CD4-positive, alpha-beta memory T cell (primary cell): ENCODE measurements at regions of chr6 and their contacts with region 1.

Region 1: DNA sequence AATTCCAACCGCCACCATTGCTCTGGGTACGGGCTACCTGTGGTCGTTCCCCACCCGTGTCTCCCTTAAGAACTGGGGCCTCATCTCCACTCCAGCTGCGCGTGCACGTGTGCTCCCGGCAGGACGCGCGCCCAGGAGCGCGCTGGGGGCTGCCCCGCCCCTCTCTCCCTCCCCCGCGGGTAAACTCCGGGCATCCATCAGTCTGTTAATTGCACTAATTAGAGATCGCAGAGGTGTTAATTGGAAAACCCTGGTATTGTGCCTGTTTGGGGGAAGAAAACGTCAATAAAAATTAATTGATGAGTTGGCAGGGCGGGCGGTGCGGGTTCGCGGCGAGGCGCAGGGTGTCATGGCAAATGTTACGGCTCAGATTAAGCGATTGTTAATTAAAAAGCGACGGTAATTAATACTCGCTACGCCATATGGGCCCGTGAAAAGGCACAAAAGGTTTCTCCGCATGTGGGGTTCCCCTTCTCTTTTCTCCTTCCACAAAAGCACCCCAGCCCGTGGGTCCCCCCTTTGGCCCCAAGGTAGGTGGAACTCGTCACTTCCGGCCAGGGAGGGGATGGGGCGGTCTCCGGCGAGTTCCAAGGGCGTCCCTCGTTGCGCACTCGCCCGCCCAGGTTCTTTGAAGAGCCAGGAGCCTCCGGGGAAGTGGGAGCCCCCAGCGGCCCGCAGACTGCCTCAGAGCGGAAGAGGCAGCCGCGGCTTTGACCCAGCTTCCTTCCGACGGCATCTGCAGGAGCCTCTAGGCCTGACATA is 14.4 kb downstream of the FOXP4 start:
- DNase-seq: peak; percentile 92 to 98 (median 93)
- H3K4me3 ChIP-seq: peak overlapping the region; percentile 59 to 87
- H3K4me3 Mint-ChIP-seq: peak overlapping the region; percentile 84 to 92 (median 87)
- H3K27ac ChIP-seq: peak overlapping the region; percentile 70
- H3K27ac Mint-ChIP-seq: peak overlapping the region; percentile 83 to 98 (median 94)
- H3K4me1 ChIP-seq: peaks cover 25% of the 10 kb centered on the region
- H3K4me1 Mint-ChIP-seq: peaks cover 16 to 42% (median 29%) of the 10 kb centered on the region in 4 donors
- H3K27me3 ChIP-seq: no peaks in the 10 kb centered on the region
- H3K27me3 Mint-ChIP-seq: no peaks in the 10 kb centered on the region

Region 2: GRCh38 chr6:41531591-41532582 is 28.7 kb before region 1 on chr6:
- CTCF ChIA-PET with region 1: no interaction called
- POLR2A ChIA-PET with region 1: no interaction called
- intact Hi-C with region 1: loop called (anchors 1 kb)
- DNase-seq: peak; percentile 54 to 70 (median 60)
- H3K4me3 ChIP-seq: peak overlapping the region; percentile 39 to 60
- H3K4me3 Mint-ChIP-seq: peak overlapping the region; percentile 75 to 88 (median 84)
- H3K27ac ChIP-seq: no peak overlapping the region
- H3K27ac Mint-ChIP-seq: peak overlapping the region; percentile 60 to 95 (median 82)
- H3K4me1 ChIP-seq: peaks cover 29% of the 10 kb centered on the region
- H3K4me1 Mint-ChIP-seq: peaks cover 18 to 46% (median 33%) of the 10 kb centered on the region in 4 donors
- H3K27me3 ChIP-seq: no peaks in the 10 kb centered on the region
- H3K27me3 Mint-ChIP-seq: no peaks in the 10 kb centered on the region

Region 3: GRCh38 chr6:41545703-41546474 is 14.7 kb before region 1 on chr6 and contains the start of gene FOXP4:
- CTCF ChIA-PET with region 1: no interaction called
- POLR2A ChIA-PET with region 1: interaction called, 7 read pairs
- intact Hi-C with region 1: loop called (anchors 1 kb)
- DNase-seq: peak; percentile 80 to 87 (median 81)
- H3K4me3 ChIP-seq: peak within 1 kb of the TSS; percentile 75 to 76
- H3K4me3 Mint-ChIP-seq: peak within 1 kb of the TSS; percentile 90 to 96 (median 92)
- H3K27ac ChIP-seq: no peak within 1 kb of the TSS
- H3K27ac Mint-ChIP-seq: peak within 1 kb of the TSS; percentile 33 to 92 (median 72)
- H3K4me1 ChIP-seq: peaks cover 37% of the 10 kb centered on the region
- H3K4me1 Mint-ChIP-seq: peaks cover 11 to 42% (median 29%) of the 10 kb centered on the region in 4 donors
- H3K27me3 ChIP-seq: peaks cover 17% of the 10 kb centered on the region
- H3K27me3 Mint-ChIP-seq: peaks cover 0 to 2% of the 10 kb centered on the region in 2 donors
- total RNA-seq, gene FOXP4: 7.4 to 7.8 TPM